A549 (cell line): ENCODE measurements at regions of chr3 and their contacts with region 1.

Region 1: DNA sequence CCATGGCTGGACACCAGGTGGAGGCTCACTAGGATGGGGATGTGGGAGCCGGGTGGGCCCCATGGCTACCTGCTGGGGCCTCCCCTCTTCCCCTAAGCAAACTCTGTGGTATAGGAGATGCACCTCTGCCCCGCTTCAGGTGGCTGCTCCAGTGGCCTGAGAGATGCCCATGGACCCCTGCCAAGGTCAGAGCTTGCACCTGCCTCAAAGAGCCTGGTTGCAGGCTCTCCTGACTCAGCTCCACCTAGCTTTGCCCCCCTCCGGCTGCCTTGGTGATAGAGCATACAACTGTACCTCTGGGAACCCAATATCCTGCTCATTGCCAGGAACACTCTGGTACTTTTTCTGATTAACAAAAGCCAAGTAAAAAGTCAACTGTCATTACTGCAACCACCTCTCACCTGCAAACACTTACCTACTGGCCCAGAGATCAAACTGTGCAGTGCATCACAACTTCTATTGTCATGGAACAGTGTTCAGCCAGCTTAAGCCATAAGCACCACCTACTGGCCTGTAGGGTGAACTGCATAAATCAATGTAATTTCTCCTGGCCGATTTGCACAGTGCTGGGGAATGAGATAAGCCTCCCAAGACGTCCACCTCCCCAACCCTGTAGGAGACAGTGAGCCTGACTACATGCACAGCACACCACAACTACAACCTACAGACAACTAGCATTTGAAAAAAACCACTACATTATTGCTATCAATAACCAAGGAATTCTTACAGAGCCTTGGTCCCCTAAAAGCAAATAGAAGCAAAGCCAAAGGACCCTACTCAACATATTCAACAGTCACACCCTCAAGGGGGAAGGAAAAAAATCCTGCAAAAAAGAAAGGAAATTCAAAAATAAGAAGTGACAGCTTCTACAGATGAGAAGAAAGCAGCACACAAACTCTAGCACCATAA is 352.4 kb upstream of the ARHGEF26 start:
- DNase-seq: peak; percentile 31 to 69
- ATAC-seq: peak; percentile 89 to 97
- H3K4me3 ChIP-seq: no peak overlapping the region
- H3K27ac ChIP-seq: no peak overlapping the region
- H3K4me1 ChIP-seq: no peaks in the 10 kb centered on the region
- CTCF ChIP-seq: peak; percentile 66
- EP300 ChIP-seq: no peak
- POLR2A ChIP-seq: no peak
- RAD21 ChIP-seq: peak; percentile 78 to 84

Region 2: GRCh38 chr3:153026026-153026425 is 742.8 kb before region 1 on chr3:
- CTCF ChIA-PET with region 1: interaction called, 17 read pairs
- POLR2A ChIA-PET with region 1: no interaction called
- DNase-seq: peak; percentile 31 to 49
- ATAC-seq: peak; percentile 19 to 56; a peak in 2 of 6 replicates
- H3K4me3 ChIP-seq: no peak overlapping the region
- H3K27ac ChIP-seq: no peak overlapping the region
- H3K4me1 ChIP-seq: no peaks in the 10 kb centered on the region
- CTCF ChIP-seq: peak; percentile 81
- EP300 ChIP-seq: no peak
- POLR2A ChIP-seq: no peak
- RAD21 ChIP-seq: peak; percentile 92 to 93

Region 3: DNA sequence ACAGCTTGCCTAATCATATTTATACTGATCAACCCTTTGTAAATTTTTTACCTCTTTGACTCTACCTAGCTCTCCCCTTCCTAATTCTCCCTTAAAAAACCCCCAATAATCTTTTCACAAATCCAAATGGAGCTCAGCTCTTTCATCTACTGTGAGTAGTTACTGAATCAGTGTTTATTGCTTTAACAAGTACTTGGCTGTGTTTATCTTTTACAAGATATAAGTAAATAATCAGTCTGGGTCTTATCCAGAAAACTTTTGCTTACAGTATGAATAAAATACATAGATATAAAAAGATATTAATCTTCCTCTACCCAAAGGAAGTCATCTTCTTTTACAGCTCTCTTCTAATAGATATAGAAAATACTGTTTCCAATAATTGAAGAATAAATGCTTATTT is 240.3 kb before region 1 on chr3:
- CTCF ChIA-PET with region 1: no interaction called
- POLR2A ChIA-PET with region 1: no interaction called
- DNase-seq: no peak
- ATAC-seq: no peak
- H3K4me3 ChIP-seq: no peak overlapping the region
- H3K27ac ChIP-seq: no peak overlapping the region
- H3K4me1 ChIP-seq: no peaks in the 10 kb centered on the region
- CTCF ChIP-seq: no peak
- EP300 ChIP-seq: no peak
- POLR2A ChIP-seq: no peak
- RAD21 ChIP-seq: no peak

Region 4: DNA sequence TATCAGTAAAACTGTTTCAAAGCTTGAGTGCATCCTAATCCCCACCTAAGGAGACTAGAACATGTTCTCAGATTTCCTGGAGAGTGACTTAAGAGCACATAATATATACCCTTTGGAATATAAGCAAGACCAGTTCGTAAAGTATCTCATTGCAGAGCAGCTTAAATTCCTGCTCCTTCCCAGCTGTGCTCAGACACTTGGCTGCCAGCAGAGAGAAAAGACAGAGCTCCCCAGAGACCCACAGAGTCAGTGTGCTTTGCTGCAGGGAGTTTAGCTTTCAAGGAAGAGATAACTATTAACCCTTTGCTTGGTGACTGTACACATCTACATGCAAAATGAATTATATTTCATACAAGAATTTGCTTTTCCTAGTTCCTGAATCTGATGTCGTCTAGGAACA is 14.3 kb after region 1 on chr3:
- CTCF ChIA-PET with region 1: interaction called, 10 read pairs
- POLR2A ChIA-PET with region 1: no interaction called
- DNase-seq: no peak
- ATAC-seq: no peak
- H3K4me3 ChIP-seq: no peak overlapping the region
- H3K27ac ChIP-seq: no peak overlapping the region
- H3K4me1 ChIP-seq: no peaks in the 10 kb centered on the region
- CTCF ChIP-seq: no peak
- EP300 ChIP-seq: no peak
- POLR2A ChIP-seq: no peak
- RAD21 ChIP-seq: no peak

Region 5: GRCh38 chr3:153925841-153926514 is 157.2 kb after region 1 on chr3:
- CTCF ChIA-PET with region 1: no interaction called
- POLR2A ChIA-PET with region 1: no interaction called
- DNase-seq: no peak
- ATAC-seq: no peak
- H3K4me3 ChIP-seq: no peak overlapping the region
- H3K27ac ChIP-seq: no peak overlapping the region
- H3K4me1 ChIP-seq: no peaks in the 10 kb centered on the region
- CTCF ChIP-seq: no peak
- EP300 ChIP-seq: no peak
- POLR2A ChIP-seq: no peak
- RAD21 ChIP-seq: no peak

Region 6: GRCh38 chr3:154018100-154018696 is 249.4 kb after region 1 on chr3:
- CTCF ChIA-PET with region 1: no interaction called
- POLR2A ChIA-PET with region 1: no interaction called
- DNase-seq: peak; percentile 11 to 45
- ATAC-seq: peak; percentile 56 to 87; a peak in 3 of 6 replicates
- H3K4me3 ChIP-seq: no peak overlapping the region
- H3K27ac ChIP-seq: no peak overlapping the region
- H3K4me1 ChIP-seq: peaks cover 7% of the 10 kb centered on the region; the same call in 1 of the 3 replicates
- CTCF ChIP-seq: peak; percentile 41
- EP300 ChIP-seq: no peak
- POLR2A ChIP-seq: no peak
- RAD21 ChIP-seq: peak in 1 of 2 experiments; percentile 58; a peak in 3 of 5 replicates